Keratinocyte (primary cell): ENCODE measurements at regions of chr5 and their contacts with region 1.

Region 1: GRCh38 chr5:112529525-112529924 is 110.4 kb upstream of the EPB41L4A start:
- DNase-seq: no peak
- H3K4me3 ChIP-seq: no peak overlapping the region
- H3K27ac ChIP-seq: no peak overlapping the region
- H3K4me1 ChIP-seq: no peaks in the 10 kb centered on the region
- H3K27me3 ChIP-seq: peaks cover 4% of the 10 kb centered on the region
- CTCF ChIP-seq: peak; percentile 36 to 45 (median 41)

Region 2: GRCh38 chr5:112681481-112681908 is 152.0 kb after region 1 on chr5:
- dilution Hi-C with region 1: no loop called
- DNase-seq: no peak
- H3K4me3 ChIP-seq: no peak overlapping the region
- H3K27ac ChIP-seq: no peak overlapping the region
- H3K4me1 ChIP-seq: no peaks in the 10 kb centered on the region
- H3K27me3 ChIP-seq: no peaks in the 10 kb centered on the region
- CTCF ChIP-seq: no peak

Region 3: GRCh38 chr5:112757468-112758208 is 228.1 kb after region 1 on chr5:
- dilution Hi-C with region 1: loop called (anchors 25 kb)
- DNase-seq: no peak
- H3K4me3 ChIP-seq: no peak overlapping the region
- H3K27ac ChIP-seq: no peak overlapping the region
- H3K4me1 ChIP-seq: no peaks in the 10 kb centered on the region
- H3K27me3 ChIP-seq: no peaks in the 10 kb centered on the region
- CTCF ChIP-seq: peak in 2 of 3 experiments; percentile 49 to 70